ENCODE measurements at regions of chr12 and their contacts with region 1.

Region 1: GRCh38 chr12:105141320-105141918 is 33.9 kb downstream of the WASHC4 start:
- DNase-seq: no peak
- ATAC-seq: no peak
- H3K4me3 ChIP-seq: no peak overlapping the region
- H3K4me3 Mint-ChIP-seq: no peak overlapping the region
- H3K27ac ChIP-seq: no peak overlapping the region
- H3K27ac Mint-ChIP-seq: peak overlapping the region; percentile 10
- H3K4me1 ChIP-seq: no peaks in the 10 kb centered on the region
- H3K4me1 Mint-ChIP-seq: peaks cover 13% of the 10 kb centered on the region
- H3K27me3 ChIP-seq: no peaks in the 10 kb centered on the region
- H3K27me3 Mint-ChIP-seq: no peaks in the 10 kb centered on the region
- CTCF ChIP-seq: no peak

Region 2: GRCh38 chr12:105158876-105159275 is 17.5 kb after region 1 on chr12:
- CTCF ChIA-PET with region 1: interaction called, 3 read pairs
- POLR2A ChIA-PET with region 1: no interaction called
- intact Hi-C with region 1: loop called (anchors 2 kb)
- DNase-seq: no peak
- ATAC-seq: no peak
- H3K4me3 ChIP-seq: no peak overlapping the region
- H3K4me3 Mint-ChIP-seq: no peak overlapping the region
- H3K27ac ChIP-seq: peak overlapping the region in 1 of 2 donors; percentile 6
- H3K27ac Mint-ChIP-seq: no peak overlapping the region
- H3K4me1 ChIP-seq: no peaks in the 10 kb centered on the region
- H3K4me1 Mint-ChIP-seq: no peaks in the 10 kb centered on the region
- H3K27me3 ChIP-seq: no peaks in the 10 kb centered on the region
- H3K27me3 Mint-ChIP-seq: no peaks in the 10 kb centered on the region
- CTCF ChIP-seq: no peak

Region 3: DNA sequence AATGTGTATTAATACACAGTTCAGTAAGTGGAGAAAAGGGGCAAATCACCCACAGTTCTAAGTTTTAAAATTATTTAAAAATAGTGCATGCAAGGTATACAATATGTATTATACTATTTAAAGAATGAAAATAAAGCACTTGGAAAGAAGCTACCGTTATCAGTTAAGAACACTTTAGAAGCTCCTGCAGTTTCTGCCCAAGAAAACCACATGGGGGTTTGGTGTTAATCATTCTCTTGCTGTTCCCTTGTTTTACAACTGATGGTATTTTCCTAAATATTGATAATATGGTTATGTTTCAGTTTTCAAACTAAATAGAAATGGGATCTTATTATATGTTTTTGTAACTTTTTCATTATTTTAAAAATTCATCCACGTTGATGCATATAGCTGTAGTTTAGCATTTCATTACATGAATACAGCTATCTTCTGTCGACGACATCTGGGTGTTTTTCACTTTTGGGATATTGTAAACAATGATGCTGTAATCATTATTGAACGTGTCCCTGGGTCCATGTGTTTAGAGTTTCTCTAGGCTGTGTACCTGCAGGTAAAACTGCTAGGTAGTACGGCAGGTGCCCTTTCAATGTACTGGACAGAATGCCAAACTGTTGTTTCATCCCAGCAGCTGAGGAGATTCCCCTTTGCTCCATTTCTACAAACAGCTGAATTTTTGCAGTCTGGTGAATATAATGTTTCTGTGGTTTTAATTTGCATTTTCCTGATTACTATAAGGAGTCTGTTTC is 30.4 kb after region 1 on chr12:
- CTCF ChIA-PET with region 1: no interaction called
- POLR2A ChIA-PET with region 1: no interaction called
- intact Hi-C with region 1: loop called (anchors 5 kb)
- DNase-seq: no peak
- ATAC-seq: no peak
- H3K4me3 ChIP-seq: no peak overlapping the region
- H3K4me3 Mint-ChIP-seq: no peak overlapping the region
- H3K27ac ChIP-seq: peak overlapping the region in 1 of 2 donors; percentile 57
- H3K27ac Mint-ChIP-seq: no peak overlapping the region
- H3K4me1 ChIP-seq: no peaks in the 10 kb centered on the region
- H3K4me1 Mint-ChIP-seq: peaks cover 5% of the 10 kb centered on the region
- H3K27me3 ChIP-seq: no peaks in the 10 kb centered on the region
- H3K27me3 Mint-ChIP-seq: no peaks in the 10 kb centered on the region
- CTCF ChIP-seq: no peak